ENCODE measurements at regions of chr22 and their contacts with region 1.

Region 1: GRCh38 chr22:32564170-32565001 is 89.8 kb downstream of the FBXO7 start:
- DNase-seq: peak; percentile 86

Region 2: DNA sequence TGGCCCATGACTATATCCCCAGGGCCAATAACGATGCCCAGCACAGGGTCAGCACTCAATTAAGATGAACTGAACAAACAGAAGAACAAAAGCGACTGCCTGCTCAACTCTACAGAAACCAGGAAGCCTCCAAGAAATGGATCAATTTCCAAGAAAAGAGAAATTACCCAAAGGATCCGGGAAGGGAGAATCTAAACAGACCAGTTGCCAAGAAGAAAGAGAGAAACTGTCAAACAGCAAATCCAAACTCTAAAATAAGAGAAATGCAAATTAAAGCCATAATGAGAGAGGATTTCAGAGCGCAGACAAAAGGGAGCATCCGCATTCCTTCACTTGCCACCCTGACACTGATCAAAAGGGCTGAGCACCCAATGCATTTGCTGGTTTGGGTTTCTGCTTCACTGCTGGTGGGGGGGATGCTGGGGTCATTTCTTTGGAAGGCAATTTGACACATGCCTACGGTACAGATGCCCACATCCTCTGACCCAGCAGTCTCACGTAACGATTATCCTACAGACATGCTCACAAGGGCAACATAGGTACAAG is 244.5 kb before region 1 on chr22:
- intact Hi-C with region 1: no loop called
- DNase-seq: peak; percentile 20

Region 3: DNA sequence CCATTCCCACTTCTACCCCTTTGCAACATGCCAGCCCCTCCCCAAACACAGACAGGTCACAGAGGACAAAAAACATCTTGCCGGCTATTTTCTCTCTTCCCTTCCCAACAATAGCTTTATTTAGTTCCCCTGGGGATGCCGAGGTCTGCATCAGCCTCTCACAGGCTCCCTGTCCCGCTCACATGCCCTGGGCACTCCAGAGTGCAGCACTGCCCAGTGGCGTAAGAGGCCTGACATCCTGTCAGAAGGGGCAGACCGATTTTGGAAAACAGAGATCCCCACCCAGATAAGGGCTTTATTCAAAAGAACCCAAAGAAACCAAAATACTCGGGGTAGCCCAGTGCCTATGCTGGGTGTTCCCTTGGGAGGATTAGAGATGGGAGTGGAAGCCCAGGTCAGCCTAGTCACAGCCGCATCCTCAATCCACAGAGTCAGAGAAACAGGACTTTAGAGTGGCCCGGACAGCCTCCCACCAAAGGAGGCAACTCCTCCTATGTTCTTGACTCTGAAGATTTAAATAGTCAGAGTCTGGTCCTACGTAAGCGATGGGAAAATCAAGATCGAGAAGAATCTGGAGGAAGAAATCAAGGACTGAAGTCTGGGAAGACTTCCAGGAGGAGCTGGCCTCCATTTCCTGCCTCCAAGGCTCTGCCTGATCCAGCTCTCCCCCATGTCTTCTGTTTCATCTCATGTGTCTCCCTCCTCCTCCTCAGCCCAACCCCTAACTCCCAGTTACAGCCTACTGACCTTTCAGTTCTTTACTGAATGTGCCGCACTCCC is 39.5 kb after region 1 on chr22:
- intact Hi-C with region 1: loop called in 1 of 2 experiments (anchors 1 kb)
- DNase-seq: no peak

Region 4: DNA sequence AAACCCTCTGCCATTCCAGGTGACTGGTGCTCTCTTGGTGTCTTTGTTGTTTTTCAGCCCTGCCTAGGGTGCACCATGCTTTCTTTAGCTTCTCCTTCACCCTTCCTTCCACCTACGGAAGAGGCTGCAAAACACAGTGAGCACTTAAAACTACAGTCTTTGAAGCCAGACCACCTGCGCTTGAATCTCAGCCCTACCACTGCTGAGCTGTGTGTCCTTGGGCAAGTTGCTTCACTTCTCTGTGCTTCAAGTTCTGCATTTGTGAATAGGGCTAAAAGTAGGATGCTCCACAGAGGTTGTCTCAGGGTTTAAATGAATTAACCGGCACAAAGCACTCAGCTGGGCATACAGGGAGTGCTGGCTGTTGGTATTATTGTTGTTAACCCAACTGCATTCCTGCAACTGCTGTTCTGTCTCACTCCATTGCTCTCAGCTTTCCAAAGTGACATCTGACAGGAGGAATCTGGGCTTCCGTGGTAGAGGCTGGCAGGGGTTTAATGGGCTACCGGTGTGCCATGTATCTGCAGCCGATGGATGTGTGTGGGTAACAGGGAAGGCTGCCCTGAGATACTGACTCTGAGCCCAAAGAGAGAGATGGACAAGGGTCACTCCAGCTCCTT is 49.5 kb after region 1 on chr22:
- intact Hi-C with region 1: no loop called
- DNase-seq: no peak